ENCODE measurements at regions of chr9 and their contacts with region 1.

Region 1: GRCh38 chr9:27333241-27334052 is 36.5 kb upstream of the EQTN start:
- DNase-seq: peak; percentile 70
- H3K4me3 ChIP-seq: no peak overlapping the region
- H3K27ac ChIP-seq: no peak overlapping the region
- H3K4me1 ChIP-seq: no peaks in the 10 kb centered on the region
- H3K27me3 ChIP-seq: peaks cover 8% of the 10 kb centered on the region

Region 2: GRCh38 chr9:27548055-27548741 is 214.8 kb after region 1 on chr9:
- in situ Hi-C with region 1: loop called (anchors 5 kb)
- DNase-seq: peak; percentile 72
- H3K4me3 ChIP-seq: no peak overlapping the region
- H3K27ac ChIP-seq: no peak overlapping the region
- H3K4me1 ChIP-seq: peaks cover 7% of the 10 kb centered on the region; the same call in 1 of the 2 replicates
- H3K27me3 ChIP-seq: no peaks in the 10 kb centered on the region

Region 3: DNA sequence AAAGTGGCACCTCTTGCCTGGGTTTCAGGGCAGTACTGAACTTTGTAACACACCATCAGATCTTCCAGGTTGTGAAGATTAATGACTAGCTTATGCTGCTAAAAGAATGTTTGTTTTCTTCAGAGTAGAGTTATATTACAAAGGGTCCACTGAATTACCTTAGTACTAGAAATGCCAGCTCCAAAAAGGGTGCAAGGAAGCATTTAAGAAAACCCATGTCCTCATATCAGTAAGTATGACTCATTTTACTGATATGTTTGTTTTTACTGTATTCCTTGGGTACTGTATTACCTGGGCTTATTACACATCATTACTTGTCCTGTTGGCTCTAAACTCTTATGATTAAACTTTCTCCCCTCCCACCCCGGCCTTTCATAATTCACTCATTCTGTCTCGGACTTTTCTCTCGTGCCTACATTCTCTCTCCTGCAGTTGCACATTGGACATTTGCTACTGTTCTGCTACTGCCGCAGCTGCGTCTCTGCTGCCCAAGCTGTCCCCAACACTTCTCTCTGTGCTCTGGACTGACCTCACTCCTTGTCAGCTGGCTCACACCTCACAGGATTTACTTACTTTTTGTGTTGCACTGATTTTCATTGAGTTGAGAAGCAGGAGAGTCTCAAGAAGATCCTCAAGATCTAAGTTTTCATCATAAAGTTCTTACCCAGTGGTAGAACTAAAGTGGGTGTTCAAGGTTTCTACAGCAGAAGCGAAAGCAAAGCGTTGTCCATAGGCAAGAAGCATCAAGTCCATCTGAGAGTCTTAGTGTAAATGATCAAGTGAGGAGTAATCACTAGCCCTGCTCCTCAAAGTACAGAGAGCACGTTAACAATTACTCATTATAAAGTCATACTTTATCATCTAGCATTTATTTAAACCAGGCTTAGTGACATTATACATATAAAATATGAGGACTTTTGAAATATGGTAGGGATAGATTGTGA is 293.1 kb after region 1 on chr9:
- in situ Hi-C with region 1: no loop called
- DNase-seq: no peak
- H3K4me3 ChIP-seq: no peak overlapping the region
- H3K27ac ChIP-seq: no peak overlapping the region
- H3K4me1 ChIP-seq: no peaks in the 10 kb centered on the region
- H3K27me3 ChIP-seq: no peaks in the 10 kb centered on the region